Dorsolateral prefrontal cortex (tissue), 120 donors: ENCODE measurements at regions of chr2 and their contacts with region 1.

Region 1: DNA sequence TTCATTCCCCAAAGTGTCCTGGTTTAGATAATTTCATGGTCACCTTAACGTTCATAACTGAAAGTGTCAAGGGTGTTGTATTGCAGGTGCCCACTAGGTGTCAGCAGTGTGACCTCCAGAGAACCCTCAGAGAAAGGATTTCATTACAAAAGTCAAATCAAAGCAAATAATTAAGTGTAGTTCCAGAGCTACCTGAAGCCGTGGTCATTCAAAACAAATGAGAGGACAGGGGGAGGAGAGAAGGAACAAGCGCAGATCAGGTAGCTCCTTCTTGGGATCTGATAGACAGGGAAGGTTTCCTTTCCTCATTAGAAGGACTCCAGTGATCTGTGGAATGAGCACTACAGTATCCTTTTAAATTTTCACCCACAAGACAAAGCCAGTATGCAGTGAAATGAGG is at the start of gene SLC9A4:
- DNase-seq: peak in 5 of 10 donors; percentile 14 to 44 (median 42)
- H3K4me3 ChIP-seq: no peak within 1 kb of the TSS
- H3K27ac ChIP-seq: no peak within 1 kb of the TSS
- H3K27me3 ChIP-seq: peaks cover 0 to 12% (median 0%) of the 10 kb centered on the region in 45 donors
- CTCF ChIP-seq: peak; percentile 63 to 89 (median 79)
- total RNA-seq, gene SLC9A4: 0.07 to 1.2 (median 0.36) TPM in 115 of 120 experiments, not detected in the others

Region 2: DNA sequence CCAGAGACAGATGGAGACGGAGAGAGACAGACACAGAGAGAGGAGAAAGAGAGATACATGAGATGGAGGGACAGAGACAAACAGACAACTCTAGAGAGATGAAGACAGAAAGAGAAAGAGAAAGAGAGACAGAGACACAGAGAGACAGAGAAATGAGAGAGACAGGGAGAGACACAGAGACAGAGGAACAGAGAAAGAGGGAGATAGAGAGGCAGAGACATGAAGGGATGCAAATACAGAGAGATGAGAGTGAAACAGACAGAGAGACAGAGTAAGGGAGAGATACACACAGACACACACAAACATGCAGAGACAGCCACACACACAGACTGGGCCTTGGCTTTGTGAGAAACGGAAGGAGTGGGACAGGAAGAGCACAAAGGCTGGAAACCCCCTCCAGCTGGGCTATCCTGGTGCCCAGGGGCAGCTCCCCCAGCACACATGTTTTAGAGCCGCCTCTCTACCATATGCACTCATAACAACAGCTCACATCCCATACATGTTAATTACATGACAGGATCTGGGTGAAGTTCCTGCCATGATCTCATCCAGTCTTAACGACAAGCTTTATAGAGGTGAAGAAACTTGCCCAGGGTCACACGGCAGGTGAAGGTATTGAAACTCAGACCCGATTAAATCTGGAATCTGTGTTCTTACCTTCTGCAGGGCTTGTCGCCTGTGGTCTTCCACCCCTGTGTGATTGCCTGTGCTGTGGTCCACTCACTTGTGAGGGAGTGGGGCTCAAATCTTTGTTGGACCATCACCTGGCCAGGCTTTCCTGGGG is 85.1 kb before region 1 on chr2:
- intact Hi-C with region 1: no loop called
- DNase-seq: no peak
- H3K4me3 ChIP-seq: no peak overlapping the region
- H3K27ac ChIP-seq: no peak overlapping the region
- H3K27me3 ChIP-seq: peaks cover 0 to 6% (median 0%) of the 10 kb centered on the region in 45 donors
- CTCF ChIP-seq: no peak

Region 3: DNA sequence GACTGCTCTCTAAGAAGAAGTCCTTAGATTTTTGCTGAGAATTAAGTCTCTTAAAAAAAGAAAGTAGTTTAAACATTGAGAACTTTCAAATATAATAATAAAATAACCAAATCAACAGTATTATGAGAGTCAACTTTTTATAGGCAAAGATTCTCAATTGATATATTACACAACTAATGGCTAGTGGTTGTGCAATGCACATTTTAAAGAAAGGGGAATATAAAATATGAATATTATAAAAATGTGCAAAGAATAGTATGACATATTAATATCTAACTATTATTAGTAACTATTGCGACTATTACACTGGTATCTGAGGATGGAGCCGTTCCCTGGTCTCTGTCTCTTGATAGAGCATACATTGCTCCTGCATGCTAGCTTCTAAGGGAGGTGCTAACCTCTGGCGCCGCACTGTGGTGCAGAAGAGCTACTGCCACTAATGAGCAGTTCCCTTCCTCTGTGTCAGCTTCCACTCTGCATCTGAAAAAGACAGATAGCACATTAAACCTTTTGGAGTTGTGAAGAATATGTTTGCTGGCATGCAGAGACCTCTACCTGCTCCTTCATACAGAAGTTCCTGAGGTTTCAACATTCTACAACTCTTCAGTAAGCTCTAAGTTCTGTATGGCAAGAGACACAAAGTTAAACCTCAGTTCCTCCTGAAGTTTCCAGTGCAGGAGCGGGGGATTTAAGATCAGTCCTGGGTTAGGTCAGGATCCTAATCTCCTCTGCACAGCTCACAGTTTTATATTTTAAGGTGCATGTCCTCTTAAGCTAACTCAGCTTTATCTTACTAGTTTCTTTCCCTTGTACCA is 142.8 kb after region 1 on chr2:
- intact Hi-C with region 1: loop called (anchors 10 kb)
- DNase-seq: peak in 8 of 10 donors; percentile 23 to 66 (median 54)
- H3K4me3 ChIP-seq: no peak overlapping the region
- H3K27ac ChIP-seq: no peak overlapping the region
- H3K27me3 ChIP-seq: peaks cover 0 to 58% (median 21%) of the 10 kb centered on the region in 45 donors
- CTCF ChIP-seq: peak; percentile 28 to 84 (median 70)

Region 4: DNA sequence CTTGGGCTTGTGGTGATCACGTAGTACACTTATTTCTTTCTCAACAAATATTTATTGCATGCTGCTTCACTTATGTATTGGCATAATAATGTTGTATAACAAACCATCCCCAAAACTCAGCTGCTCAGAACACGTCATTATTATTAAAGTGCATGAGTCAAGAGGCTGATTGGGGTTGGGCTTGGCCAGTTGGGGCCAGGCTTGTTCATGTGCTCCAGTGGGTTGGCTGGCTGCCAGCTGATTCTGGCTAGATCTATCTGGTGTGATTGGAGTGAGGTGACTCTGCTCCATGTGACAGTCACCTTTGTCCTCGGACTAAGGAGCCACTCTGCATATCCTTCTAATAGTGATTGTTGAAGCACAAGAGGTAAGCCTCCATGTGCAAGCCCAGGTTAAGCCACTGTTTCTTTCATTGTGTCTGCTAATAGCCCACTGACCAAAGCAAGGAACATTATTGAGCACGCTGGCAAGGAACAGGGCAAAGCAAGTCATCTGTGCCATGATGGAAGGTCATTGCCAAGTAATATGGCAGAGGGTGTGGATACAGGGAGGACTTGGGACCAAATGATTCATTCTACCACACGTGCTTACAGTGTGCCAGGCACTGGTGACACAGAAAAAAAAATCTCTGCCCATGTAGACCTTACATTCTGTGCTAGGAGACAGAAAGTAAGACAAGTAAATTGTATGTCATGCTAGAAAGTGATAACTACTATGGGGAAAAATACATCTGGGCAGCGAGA is 225.5 kb after region 1 on chr2:
- intact Hi-C with region 1: loop called in 1 of 2 experiments (anchors 10 kb)
- DNase-seq: no peak
- H3K4me3 ChIP-seq: no peak overlapping the region
- H3K27ac ChIP-seq: no peak overlapping the region
- H3K27me3 ChIP-seq: peaks cover 0 to under 1% (median 0%) of the 10 kb centered on the region in 45 donors
- CTCF ChIP-seq: no peak